SK-N-SH (cell line): ENCODE measurements at regions of chr5 and their contacts with region 1.

Region 1: DNA sequence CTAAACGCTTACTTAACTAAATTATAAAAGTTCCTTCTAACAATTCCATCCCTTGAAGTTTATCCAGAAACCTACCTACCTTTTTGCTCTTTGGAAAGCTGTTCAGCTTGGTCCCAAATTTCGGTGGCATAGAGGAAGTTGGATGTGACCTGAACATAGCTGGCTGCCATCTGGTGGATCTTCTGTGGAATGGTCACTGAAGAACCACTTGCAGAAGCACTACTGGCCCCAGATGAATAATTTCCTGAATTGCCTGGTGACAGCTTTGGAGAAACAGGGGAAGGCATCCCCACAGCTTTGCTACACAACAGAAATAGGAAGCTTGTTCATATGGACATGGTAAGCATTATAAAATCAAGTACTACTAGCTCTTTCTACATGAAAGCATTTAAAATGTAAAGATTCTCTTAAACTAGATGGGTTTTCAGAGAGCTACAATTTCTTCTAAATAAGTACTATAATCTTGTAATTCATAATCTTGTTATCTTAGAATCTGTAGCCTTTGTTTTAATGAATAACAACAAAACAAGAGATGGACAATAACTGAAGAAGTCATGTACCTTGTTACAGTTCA is 9.9 kb downstream of the LEAP2 start:
- DNase-seq: peak; percentile 53
- H3K4me3 ChIP-seq: no peak overlapping the region
- H3K27ac ChIP-seq: peak overlapping the region in 1 of 2 experiments; percentile 32; a peak in 2 of 4 replicates
- H3K4me1 ChIP-seq: no peaks in the 10 kb centered on the region; a peak in 1 of 4 replicates
- H3K27me3 ChIP-seq: no peaks in the 10 kb centered on the region
- CTCF ChIP-seq: peak; percentile 73
- EP300 ChIP-seq: no peak
- RAD21 ChIP-seq: peak; percentile 65

Region 2: GRCh38 chr5:132854301-132854700 is 29.0 kb before region 1 on chr5:
- CTCF ChIA-PET with region 1: no interaction called
- POLR2A ChIA-PET with region 1: no interaction called
- DNase-seq: peak; percentile 20
- H3K4me3 ChIP-seq: no peak overlapping the region
- H3K27ac ChIP-seq: peak overlapping the region in 1 of 2 experiments; percentile 25; a peak in 1 of 4 replicates
- H3K4me1 ChIP-seq: no peaks in the 10 kb centered on the region
- H3K27me3 ChIP-seq: no peaks in the 10 kb centered on the region
- CTCF ChIP-seq: no peak
- EP300 ChIP-seq: no peak
- RAD21 ChIP-seq: no peak

Region 3: GRCh38 chr5:132866342-132867045 is 16.9 kb before region 1 on chr5 and contains the starts of genes GDF9 and UQCRQ:
- CTCF ChIA-PET with region 1: interaction called, 23 read pairs
- POLR2A ChIA-PET with region 1: interaction called, 7 read pairs
- DNase-seq: peak; percentile 96
- H3K4me3 ChIP-seq: peak within 1 kb of the TSS; percentile 78 to 99
- H3K27ac ChIP-seq: peak within 1 kb of the TSS; percentile 73 to 92
- H3K4me1 ChIP-seq: peaks cover 7 to 14% of the 10 kb centered on the region in 2 experiments; a peak in 3 of 4 replicates
- H3K27me3 ChIP-seq: no peaks in the 10 kb centered on the region
- CTCF ChIP-seq: peak; percentile 46
- EP300 ChIP-seq: peak in 1 of 2 experiments; percentile 32; a peak in 1 of 4 replicates
- RAD21 ChIP-seq: peak; percentile 62
- polyA plus RNA-seq, gene GDF9: 0.82 and 1.2 TPM in 2 replicates
- polyA plus RNA-seq, gene UQCRQ: 510 and 694 TPM in 2 replicates

Region 4: GRCh38 chr5:132896685-132897084 is 13.3 kb after region 1 on chr5:
- CTCF ChIA-PET with region 1: interaction called, 10 read pairs
- POLR2A ChIA-PET with region 1: no interaction called
- DNase-seq: no peak
- H3K4me3 ChIP-seq: no peak overlapping the region
- H3K27ac ChIP-seq: no peak overlapping the region
- H3K4me1 ChIP-seq: no peaks in the 10 kb centered on the region
- H3K27me3 ChIP-seq: no peaks in the 10 kb centered on the region
- CTCF ChIP-seq: no peak
- EP300 ChIP-seq: no peak
- RAD21 ChIP-seq: no peak

Region 5: DNA sequence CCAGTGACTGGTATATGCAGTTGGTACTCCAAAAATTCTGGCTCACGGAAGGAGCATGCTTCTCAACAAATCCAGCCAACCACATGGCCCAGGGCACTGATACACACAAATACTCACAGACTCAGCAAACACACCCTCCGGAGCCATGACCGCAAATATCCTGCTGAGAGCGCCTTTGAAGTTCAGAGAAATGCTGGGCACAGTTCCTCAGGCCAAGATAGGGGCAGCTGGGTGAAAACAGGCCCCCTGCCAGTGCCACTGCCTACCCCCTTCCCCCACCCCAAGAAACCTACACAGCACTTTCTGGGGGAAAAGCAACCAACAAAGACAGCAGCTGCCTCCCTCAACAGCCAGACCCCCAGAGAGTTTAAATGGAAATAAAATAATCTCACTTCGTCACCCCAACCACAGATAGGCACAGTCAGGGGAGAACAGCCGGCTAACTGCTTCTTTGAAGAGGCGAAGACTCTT is 965.0 kb after region 1 on chr5:
- CTCF ChIA-PET with region 1: no interaction called
- POLR2A ChIA-PET with region 1: no interaction called
- DNase-seq: no peak
- H3K4me3 ChIP-seq: no peak overlapping the region
- H3K27ac ChIP-seq: no peak overlapping the region
- H3K4me1 ChIP-seq: peaks cover 0 to 6% of the 10 kb centered on the region in 2 experiments; a peak in 1 of 4 replicates
- H3K27me3 ChIP-seq: no peaks in the 10 kb centered on the region
- CTCF ChIP-seq: no peak
- EP300 ChIP-seq: no peak
- RAD21 ChIP-seq: no peak